Activated CD4-positive, alpha-beta T cell treated with anti-CD3 and anti-CD28 coated beads for 36 hours (primary cell): ENCODE measurements at regions of chr10 and their contacts with region 1.

Region 1: GRCh38 chr10:75401569-75402485 is at the start of gene ZNF503:
- DNase-seq: peak; percentile 79
- ATAC-seq: peak; percentile 81
- H3K4me3 Mint-ChIP-seq: peak within 1 kb of the TSS; percentile 74
- H3K27ac Mint-ChIP-seq: no peak within 1 kb of the TSS
- H3K4me1 Mint-ChIP-seq: peaks cover 22% of the 10 kb centered on the region
- H3K27me3 Mint-ChIP-seq: peaks cover 56% of the 10 kb centered on the region
- total RNA-seq, gene ZNF503: 0.40 to 0.46 TPM

Region 2: DNA sequence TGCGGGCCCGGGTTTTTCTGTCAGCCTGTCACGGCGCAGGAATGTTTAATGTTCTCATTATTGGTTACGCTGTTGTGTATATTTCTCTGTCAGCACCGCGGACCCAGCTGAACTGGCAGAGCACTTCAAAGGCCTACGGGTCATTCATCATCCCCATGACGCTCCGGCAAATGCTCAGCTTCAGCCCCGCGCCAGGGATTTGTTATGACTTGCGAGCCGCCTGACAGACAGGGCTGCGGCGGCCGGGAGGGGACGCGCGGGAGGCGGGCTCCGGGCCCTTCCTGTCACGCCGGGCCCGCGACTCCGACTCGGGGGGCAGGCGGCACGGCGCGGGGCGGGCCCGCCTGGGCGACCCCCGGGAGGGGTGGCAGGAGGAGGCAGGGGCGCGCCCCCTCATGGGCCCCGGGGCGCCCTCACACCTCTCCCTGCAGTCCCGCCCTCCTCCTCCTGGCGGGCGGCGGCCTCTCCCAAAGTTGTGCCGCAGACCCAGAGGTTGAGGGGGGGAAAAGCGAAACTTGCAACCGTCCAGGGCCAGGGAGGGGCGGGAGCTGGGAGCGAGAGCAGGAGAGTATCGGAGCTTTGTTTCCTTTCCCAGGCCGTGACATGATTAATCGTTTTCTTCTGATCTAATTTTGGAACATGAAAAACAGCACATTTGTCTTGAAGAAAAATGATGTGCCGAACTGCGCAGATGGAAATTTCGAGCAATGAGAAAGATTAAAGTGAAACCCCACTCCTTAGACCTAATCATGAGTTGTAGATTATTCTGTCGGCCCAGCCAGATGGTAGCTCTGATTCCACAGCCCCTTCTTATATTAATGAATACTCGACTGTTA is 106.7 kb before region 1 on chr10:
- CTCF ChIA-PET with region 1: no interaction called
- POLR2A ChIA-PET with region 1: no interaction called
- intact Hi-C with region 1: loop called in 1 of 2 experiments (anchors 2 kb)
- DNase-seq: peak; percentile 91
- ATAC-seq: peak; percentile 96
- H3K4me3 Mint-ChIP-seq: peak overlapping the region; percentile 47
- H3K27ac Mint-ChIP-seq: no peak overlapping the region
- H3K4me1 Mint-ChIP-seq: peaks cover 5% of the 10 kb centered on the region
- H3K27me3 Mint-ChIP-seq: peaks cover 10% of the 10 kb centered on the region

Region 3: DNA sequence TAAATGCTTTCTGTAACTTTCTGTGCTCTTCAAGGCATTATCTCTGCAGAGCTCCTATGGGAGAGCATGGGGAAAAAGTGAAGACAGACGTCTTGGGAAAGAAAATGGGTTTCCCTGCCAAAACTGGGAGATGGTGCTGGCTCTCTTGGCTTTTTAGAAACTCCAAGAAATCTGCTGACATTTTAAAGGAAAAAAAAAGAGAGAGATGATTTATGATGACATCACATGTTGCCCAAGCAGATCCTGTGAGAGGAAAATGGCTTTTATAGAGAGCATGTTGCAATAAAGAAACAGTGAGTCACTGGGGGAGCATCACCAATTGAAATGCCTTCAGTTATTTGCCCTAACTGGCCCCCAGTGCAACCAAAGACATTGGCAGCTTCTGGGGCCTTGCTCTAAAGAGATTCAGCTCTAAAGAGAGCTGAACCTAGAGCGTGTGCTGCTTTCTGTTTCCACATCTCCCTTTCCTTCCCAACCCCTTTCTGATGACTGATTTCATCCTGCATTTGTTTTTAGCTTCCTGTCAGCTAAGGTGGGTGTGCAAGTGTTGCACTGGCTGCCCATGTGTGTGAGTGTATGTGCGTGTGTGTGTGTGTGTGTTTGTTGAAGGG is 67.3 kb after region 1 on chr10:
- CTCF ChIA-PET with region 1: no interaction called
- POLR2A ChIA-PET with region 1: no interaction called
- intact Hi-C with region 1: no loop called
- DNase-seq: no peak
- ATAC-seq: peak; percentile 16
- H3K4me3 Mint-ChIP-seq: no peak overlapping the region
- H3K27ac Mint-ChIP-seq: no peak overlapping the region
- H3K4me1 Mint-ChIP-seq: no peaks in the 10 kb centered on the region
- H3K27me3 Mint-ChIP-seq: peaks cover 4% of the 10 kb centered on the region

Region 4: GRCh38 chr10:76036111-76036940 is 634.5 kb after region 1 on chr10:
- CTCF ChIA-PET with region 1: no interaction called
- POLR2A ChIA-PET with region 1: no interaction called
- intact Hi-C with region 1: loop called (anchors 2 to 10 kb)
- DNase-seq: peak; percentile 73
- ATAC-seq: peak; percentile 55
- H3K4me3 Mint-ChIP-seq: no peak overlapping the region
- H3K27ac Mint-ChIP-seq: no peak overlapping the region
- H3K4me1 Mint-ChIP-seq: no peaks in the 10 kb centered on the region
- H3K27me3 Mint-ChIP-seq: peaks cover 3% of the 10 kb centered on the region

Region 5: GRCh38 chr10:76547352-76547972 is 1145.6 kb after region 1 on chr10:
- CTCF ChIA-PET with region 1: no interaction called
- POLR2A ChIA-PET with region 1: no interaction called
- intact Hi-C with region 1: loop called in 1 of 2 experiments (anchors 5 kb)
- DNase-seq: peak; percentile 80
- ATAC-seq: no peak
- H3K4me3 Mint-ChIP-seq: no peak overlapping the region
- H3K27ac Mint-ChIP-seq: no peak overlapping the region
- H3K4me1 Mint-ChIP-seq: no peaks in the 10 kb centered on the region
- H3K27me3 Mint-ChIP-seq: peaks cover 2% of the 10 kb centered on the region

Region 6: DNA sequence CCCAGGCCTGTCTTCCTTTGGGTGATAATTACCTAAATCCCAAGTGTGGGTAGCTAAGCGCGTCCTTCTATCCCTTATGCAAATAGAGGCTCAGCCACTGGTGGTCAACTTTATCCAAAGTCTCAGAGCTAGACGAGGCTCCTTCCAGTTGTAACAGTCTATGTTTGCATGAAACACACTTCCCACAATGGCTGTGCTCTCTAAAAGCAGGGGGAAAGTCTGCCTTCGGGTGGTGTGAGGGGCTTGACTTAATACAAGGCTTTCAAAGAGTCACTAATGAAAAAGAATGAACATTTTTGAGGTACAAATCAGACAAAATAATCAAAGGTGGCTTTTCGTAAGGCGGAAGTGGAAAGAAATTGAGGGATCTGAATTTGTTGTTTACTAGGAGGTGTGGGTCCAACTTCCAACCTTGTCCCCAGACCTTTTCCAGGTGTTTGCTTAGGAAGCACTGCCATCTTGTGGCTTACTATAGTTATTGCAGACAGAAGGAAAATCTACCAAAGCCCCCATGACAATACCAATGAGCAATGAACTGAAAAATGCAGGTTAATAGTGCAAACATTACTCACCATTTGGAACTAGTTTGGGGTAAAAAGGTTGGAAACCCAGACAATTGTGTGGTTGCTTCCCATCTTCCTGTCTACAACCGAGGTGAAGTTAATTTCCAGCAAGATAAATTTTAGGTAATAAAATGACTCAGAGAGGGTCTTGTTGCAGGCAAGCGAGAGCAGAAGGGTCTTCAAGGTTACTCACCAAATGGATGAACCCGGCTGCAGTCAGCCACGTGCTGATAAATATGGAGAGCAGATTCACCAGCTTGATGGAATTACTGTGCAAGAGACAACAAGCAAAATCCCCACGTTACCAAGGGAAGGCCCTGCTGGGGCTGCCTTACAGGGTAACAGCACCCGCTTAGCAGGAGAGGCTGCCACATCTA is 1710.1 kb after region 1 on chr10:
- CTCF ChIA-PET with region 1: no interaction called
- POLR2A ChIA-PET with region 1: no interaction called
- intact Hi-C with region 1: loop called in 1 of 2 experiments (anchors 5 kb)
- DNase-seq: peak; percentile 10
- ATAC-seq: no peak
- H3K4me3 Mint-ChIP-seq: no peak overlapping the region
- H3K27ac Mint-ChIP-seq: no peak overlapping the region
- H3K4me1 Mint-ChIP-seq: no peaks in the 10 kb centered on the region
- H3K27me3 Mint-ChIP-seq: peaks cover 5% of the 10 kb centered on the region